Activated T-helper 2 cell treated with anti-CD3 and anti-CD28 coated beads, Interferon-gamma antibody, Interleukin-2, Interleukin-4, amounts not matched to agents 10 μg/mL and 5 μg/mL and 100 μg/mL, durations not matched to agents 14 hours and 24 hours and 36 hours (primary cell): ENCODE measurements at regions of chr2 and their contacts with region 1.

Region 1: DNA sequence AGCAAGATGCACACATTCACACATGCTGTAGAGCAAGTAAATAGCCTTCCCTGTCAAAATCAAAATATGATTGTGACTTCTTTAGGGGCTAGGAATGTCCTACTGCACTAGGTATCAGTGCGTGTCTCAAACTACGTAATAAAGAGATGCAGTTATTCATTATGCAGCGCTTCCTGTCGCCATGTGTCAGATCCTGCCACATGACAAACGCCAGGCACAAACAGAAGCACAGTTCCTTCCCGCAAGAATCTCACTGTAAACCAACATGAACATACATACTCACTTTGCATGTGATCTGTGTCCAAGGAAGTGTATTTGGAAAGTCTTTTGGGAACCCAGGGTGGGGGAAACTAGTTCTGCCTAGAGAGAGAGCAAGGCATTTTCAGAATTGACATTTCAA is 599.9 kb downstream of the RNF144A start:
- DNase-seq: no peak
- H3K4me3 Mint-ChIP-seq: peak overlapping the region; percentile 1
- H3K27ac Mint-ChIP-seq: peak overlapping the region; percentile 92
- H3K4me1 Mint-ChIP-seq: peaks cover 57% of the 10 kb centered on the region
- H3K27me3 Mint-ChIP-seq: no peaks in the 10 kb centered on the region

Region 2: DNA sequence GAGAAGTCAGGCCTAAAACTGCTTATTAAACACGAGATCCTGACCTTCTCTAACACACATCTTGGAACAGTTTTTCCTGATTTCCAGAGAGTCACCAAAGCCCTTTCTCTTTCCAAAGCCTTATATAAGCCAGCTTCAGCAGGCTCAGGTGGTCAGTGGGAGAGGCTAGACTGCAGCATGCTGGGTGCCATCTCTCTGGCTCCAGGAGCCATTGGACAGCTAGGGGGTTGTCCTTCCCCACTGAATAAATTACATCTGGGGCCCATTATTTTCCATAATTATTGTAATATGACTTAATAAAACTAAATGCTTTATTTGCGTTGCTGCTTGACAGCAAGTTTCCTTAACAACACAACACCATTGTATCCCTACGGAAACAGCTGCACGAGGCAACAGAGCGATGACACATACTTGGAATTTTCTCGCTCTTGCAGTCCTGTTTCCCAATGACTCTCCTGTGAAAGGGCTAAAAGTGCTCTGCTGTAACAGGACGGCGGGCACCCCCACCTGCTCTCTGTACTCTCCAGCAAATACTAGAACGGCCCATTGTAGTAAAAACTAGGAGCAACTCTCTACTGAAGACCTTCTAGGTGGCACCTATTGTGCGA is 439.3 kb before region 1 on chr2:
- intact Hi-C with region 1: no loop called
- DNase-seq: no peak
- H3K4me3 Mint-ChIP-seq: no peak overlapping the region
- H3K27ac Mint-ChIP-seq: no peak overlapping the region
- H3K4me1 Mint-ChIP-seq: peaks cover 2% of the 10 kb centered on the region
- H3K27me3 Mint-ChIP-seq: no peaks in the 10 kb centered on the region

Region 3: DNA sequence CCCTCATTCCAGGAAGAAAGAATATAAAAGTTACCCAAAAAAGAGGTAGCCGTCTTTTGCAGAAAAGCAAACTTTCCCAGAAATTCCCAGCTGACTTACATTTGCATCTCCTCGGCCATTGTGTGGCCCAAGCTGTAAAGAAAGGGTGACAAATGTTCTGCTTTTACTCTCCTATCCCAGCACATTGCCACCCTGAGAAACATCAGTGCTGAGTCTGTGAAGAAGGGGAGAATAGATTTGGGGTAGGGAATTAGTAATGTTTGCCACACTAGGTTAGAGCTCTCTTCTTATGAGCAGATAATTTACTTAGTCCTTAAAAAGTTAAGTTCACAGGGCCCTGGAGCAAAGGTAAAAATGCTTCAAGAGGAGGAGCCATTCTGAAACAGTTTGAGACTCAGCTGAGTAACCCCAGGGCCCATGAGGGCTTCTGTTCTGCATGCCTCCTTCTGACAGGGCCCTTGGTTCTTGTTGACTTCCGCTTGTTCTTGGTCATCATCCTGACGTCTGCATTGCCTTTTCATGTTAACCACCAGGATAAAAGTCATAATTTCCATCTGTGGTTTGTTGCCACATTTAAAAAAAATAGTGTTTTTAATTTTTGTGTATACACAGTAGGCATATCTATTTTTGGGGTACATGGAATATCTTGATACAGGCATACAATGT is 49.2 kb before region 1 on chr2:
- intact Hi-C with region 1: loop called (anchors 2 kb)
- DNase-seq: peak; percentile 57
- H3K4me3 Mint-ChIP-seq: peak overlapping the region; percentile 15
- H3K27ac Mint-ChIP-seq: peak overlapping the region; percentile 96
- H3K4me1 Mint-ChIP-seq: peaks cover 58% of the 10 kb centered on the region
- H3K27me3 Mint-ChIP-seq: no peaks in the 10 kb centered on the region

Region 4: GRCh38 chr2:8119782-8120505 is 602.9 kb after region 1 on chr2:
- intact Hi-C with region 1: no loop called
- DNase-seq: no peak
- H3K4me3 Mint-ChIP-seq: no peak overlapping the region
- H3K27ac Mint-ChIP-seq: peak overlapping the region; percentile 83
- H3K4me1 Mint-ChIP-seq: peaks cover 26% of the 10 kb centered on the region
- H3K27me3 Mint-ChIP-seq: no peaks in the 10 kb centered on the region